ENCODE measurements at regions of chr10 and their contacts with region 1.

Region 1: GRCh38 chr10:24952707-24953645 is 570 bp upstream of the PRTFDC1 start:
- DNase-seq: peak; percentile 4 to 76 (median 45)
- ATAC-seq: peak; percentile 82 to 90 (median 83)
- H3K4me3 ChIP-seq: peak overlapping the region; percentile 62 to 73
- H3K4me3 Mint-ChIP-seq: peak overlapping the region; percentile 74 to 83 (median 83)
- H3K27ac ChIP-seq: peak overlapping the region; percentile 43
- H3K27ac Mint-ChIP-seq: peak overlapping the region; percentile 75 to 77
- H3K4me1 ChIP-seq: peaks cover 0 to 14% of the 10 kb centered on the region in 2 experiments
- H3K4me1 Mint-ChIP-seq: peaks cover 11 to 32% (median 13%) of the 10 kb centered on the region in 3 donors
- H3K27me3 ChIP-seq: no peaks in the 10 kb centered on the region
- H3K27me3 Mint-ChIP-seq: peaks cover 0 to 2% of the 10 kb centered on the region in 2 donors

Region 2: GRCh38 chr10:24469990-24470389 is 483.0 kb before region 1 on chr10:
- CTCF ChIA-PET with region 1: no interaction called
- POLR2A ChIA-PET with region 1: no interaction called
- DNase-seq: no peak
- ATAC-seq: no peak
- H3K4me3 ChIP-seq: no peak overlapping the region
- H3K4me3 Mint-ChIP-seq: no peak overlapping the region
- H3K27ac ChIP-seq: no peak overlapping the region
- H3K27ac Mint-ChIP-seq: peak overlapping the region in 1 of 2 donors; percentile 17
- H3K4me1 ChIP-seq: no peaks in the 10 kb centered on the region
- H3K4me1 Mint-ChIP-seq: peaks cover 0 to 14% (median 14%) of the 10 kb centered on the region in 3 donors
- H3K27me3 ChIP-seq: peaks cover 0 to 11% of the 10 kb centered on the region in 2 experiments
- H3K27me3 Mint-ChIP-seq: peaks cover 15 to 29% of the 10 kb centered on the region in 2 donors

Region 3: DNA sequence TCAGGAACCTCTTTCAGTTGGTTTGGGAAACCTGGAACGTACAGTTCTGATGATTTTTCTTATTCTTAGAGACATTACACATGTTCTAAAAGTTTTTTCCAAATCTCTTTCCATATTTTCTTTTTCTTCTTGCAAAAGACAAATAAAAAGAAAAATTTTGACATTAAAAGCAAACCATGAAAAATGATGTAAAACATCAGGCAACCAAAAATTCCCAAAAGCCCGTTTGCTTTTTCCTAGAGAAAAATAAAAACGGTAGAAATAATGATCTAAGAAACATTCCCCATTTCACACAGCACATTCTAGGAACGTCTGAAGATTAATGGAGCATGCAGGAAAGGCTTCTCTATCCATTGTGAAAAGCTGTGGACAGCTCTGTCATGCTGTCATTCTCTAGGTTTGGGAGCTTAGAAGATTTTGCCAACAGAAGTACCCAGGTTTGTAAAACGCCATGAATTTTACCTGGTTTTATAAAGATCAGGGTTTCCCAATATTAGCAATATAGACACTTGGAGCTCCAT is 10.6 kb after region 1 on chr10:
- CTCF ChIA-PET with region 1: no interaction called
- POLR2A ChIA-PET with region 1: interaction called in 1 of 2 experiments, 11 read pairs
- DNase-seq: no peak
- ATAC-seq: no peak
- H3K4me3 ChIP-seq: no peak overlapping the region
- H3K4me3 Mint-ChIP-seq: no peak overlapping the region
- H3K27ac ChIP-seq: no peak overlapping the region
- H3K27ac Mint-ChIP-seq: no peak overlapping the region
- H3K4me1 ChIP-seq: no peaks in the 10 kb centered on the region
- H3K4me1 Mint-ChIP-seq: no peaks in the 10 kb centered on the region
- H3K27me3 ChIP-seq: no peaks in the 10 kb centered on the region
- H3K27me3 Mint-ChIP-seq: no peaks in the 10 kb centered on the region

Region 4: GRCh38 chr10:25357269-25357668 is 404.3 kb after region 1 on chr10:
- CTCF ChIA-PET with region 1: interaction called in 1 of 2 experiments, 10 read pairs
- POLR2A ChIA-PET with region 1: no interaction called
- DNase-seq: no peak
- ATAC-seq: no peak
- H3K4me3 ChIP-seq: no peak overlapping the region
- H3K4me3 Mint-ChIP-seq: no peak overlapping the region
- H3K27ac ChIP-seq: no peak overlapping the region
- H3K27ac Mint-ChIP-seq: no peak overlapping the region
- H3K4me1 ChIP-seq: no peaks in the 10 kb centered on the region
- H3K4me1 Mint-ChIP-seq: no peaks in the 10 kb centered on the region
- H3K27me3 ChIP-seq: no peaks in the 10 kb centered on the region
- H3K27me3 Mint-ChIP-seq: no peaks in the 10 kb centered on the region